Activated T-helper 1 cell treated with anti-CD3 and anti-CD28 coated beads, Interleukin-12 subunit alpha, Interleukin-12 subunit beta, Interleukin-2, Interleukin-4 antibody, amounts not matched to agents 30 ng/mL and 10 ng/mL and 1 ng/mL, durations not matched to agents 14 hours and 24 hours and 36 hours (primary cell): ENCODE measurements at regions of chrX and their contacts with region 1.

Region 1: DNA sequence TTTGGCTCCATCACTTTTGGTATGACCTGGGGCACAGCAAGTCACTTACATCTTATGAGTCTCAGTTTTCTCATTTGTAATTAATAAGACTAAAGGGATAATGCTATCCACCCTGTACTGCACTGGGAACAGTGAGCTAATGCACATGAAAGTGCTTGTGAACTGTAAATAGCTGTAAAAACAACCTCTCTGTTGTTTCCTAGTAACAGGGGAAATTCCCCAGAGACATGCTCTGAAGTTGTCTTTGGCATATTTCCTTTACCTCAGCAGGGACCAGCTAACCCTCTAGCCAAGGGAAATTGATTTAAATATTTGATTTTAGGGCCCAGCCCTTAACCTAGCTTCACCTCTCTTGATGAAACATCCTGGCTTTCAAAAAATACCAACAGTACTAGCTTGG is 6.1 kb upstream of the CYSLTR1 start:
- DNase-seq: peak; percentile 33
- H3K4me3 Mint-ChIP-seq: peak overlapping the region; percentile 53
- H3K27ac Mint-ChIP-seq: peak overlapping the region; percentile 93
- H3K4me1 Mint-ChIP-seq: peaks cover 73% of the 10 kb centered on the region
- H3K27me3 Mint-ChIP-seq: no peaks in the 10 kb centered on the region

Region 2: GRCh38 chrX:77519765-77520164 is 813.8 kb before region 1 on chrX:
- intact Hi-C with region 1: no loop called
- DNase-seq: no peak
- H3K4me3 Mint-ChIP-seq: no peak overlapping the region
- H3K27ac Mint-ChIP-seq: no peak overlapping the region
- H3K4me1 Mint-ChIP-seq: peaks cover 5% of the 10 kb centered on the region
- H3K27me3 Mint-ChIP-seq: no peaks in the 10 kb centered on the region

Region 3: DNA sequence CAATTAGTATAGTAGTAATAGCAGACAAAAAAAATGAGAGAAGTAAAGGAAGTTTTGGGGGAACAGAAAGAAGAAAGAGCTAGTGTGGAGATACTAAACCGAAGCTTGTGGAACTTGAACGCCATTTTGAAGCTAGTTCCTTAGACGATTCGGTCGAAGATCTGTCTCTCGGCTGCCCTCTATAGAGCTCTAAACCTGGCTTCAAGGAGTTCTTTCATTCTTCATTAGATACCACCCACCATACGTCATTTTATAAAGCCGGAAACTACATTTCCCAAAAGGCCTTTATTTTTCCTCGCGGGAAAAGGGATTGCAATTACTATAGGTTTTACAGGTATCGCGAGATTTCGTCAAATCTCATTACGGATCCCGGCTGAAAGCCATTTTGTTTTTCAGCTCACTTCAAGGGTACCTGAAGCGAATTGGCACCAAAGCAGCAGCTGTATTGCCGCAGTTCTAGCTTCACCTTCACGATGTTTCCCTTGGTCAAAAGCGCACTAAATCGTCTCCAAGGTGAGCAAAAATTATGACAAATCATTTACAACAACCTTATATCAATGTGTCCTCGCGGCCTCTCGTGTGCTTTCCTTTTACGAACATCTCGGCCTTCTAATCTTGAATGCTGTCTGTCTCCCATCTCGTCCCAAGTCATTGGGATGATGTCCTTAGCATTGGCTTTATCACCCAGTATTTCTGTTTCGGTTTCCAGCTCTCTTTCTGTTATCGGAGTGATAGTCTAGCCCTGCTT is 434.3 kb before region 1 on chrX and contains the start of gene COX7B:
- intact Hi-C with region 1: loop called (anchors 5 kb)
- DNase-seq: peak; percentile 65
- H3K4me3 Mint-ChIP-seq: peak within 1 kb of the TSS; percentile 95
- H3K27ac Mint-ChIP-seq: peak within 1 kb of the TSS; percentile 94
- H3K4me1 Mint-ChIP-seq: peaks cover 14% of the 10 kb centered on the region
- H3K27me3 Mint-ChIP-seq: peaks cover 2% of the 10 kb centered on the region
- total RNA-seq, gene COX7B: 272 and 286 TPM in 2 replicates

Region 4: GRCh38 chrX:78139160-78140123 is 194.1 kb before region 1 on chrX and contains the start of gene TAF9B:
- intact Hi-C with region 1: loop called (anchors 5 kb)
- DNase-seq: peak; percentile 78
- H3K4me3 Mint-ChIP-seq: peak within 1 kb of the TSS; percentile 92
- H3K27ac Mint-ChIP-seq: peak within 1 kb of the TSS; percentile 86
- H3K4me1 Mint-ChIP-seq: no peaks in the 10 kb centered on the region
- H3K27me3 Mint-ChIP-seq: no peaks in the 10 kb centered on the region
- total RNA-seq, gene TAF9B: 14.9 and 15.0 TPM in 2 replicates

Region 5: DNA sequence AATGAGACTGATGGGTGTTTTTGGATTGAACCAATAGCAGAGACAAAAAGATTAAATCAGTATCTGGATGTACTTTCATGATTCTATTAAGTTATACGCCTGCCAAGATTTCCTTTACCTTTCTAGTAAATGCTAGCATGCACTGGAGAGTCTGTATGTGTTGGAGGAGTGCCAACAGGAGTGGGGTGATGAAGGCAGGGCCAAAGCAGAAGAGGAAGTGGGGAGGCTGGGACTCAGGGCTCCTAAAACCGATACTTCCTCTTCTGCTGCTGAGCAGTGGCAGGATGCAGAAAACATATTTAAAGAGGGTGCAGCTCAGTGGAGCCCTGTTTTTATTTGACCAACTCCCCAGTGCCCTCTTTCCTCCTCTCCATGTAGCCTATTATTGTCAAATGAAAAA is 11.7 kb before region 1 on chrX:
- intact Hi-C with region 1: loop called (anchors 1 kb)
- DNase-seq: peak; percentile 31
- H3K4me3 Mint-ChIP-seq: peak overlapping the region; percentile 64
- H3K27ac Mint-ChIP-seq: peak overlapping the region; percentile 89
- H3K4me1 Mint-ChIP-seq: peaks cover 41% of the 10 kb centered on the region
- H3K27me3 Mint-ChIP-seq: no peaks in the 10 kb centered on the region

Region 6: GRCh38 chrX:78979789-78980464 is 646.4 kb after region 1 on chrX:
- intact Hi-C with region 1: loop called (anchors 10 kb)
- DNase-seq: no peak
- H3K4me3 Mint-ChIP-seq: peak overlapping the region; percentile 67
- H3K27ac Mint-ChIP-seq: peak overlapping the region; percentile 100
- H3K4me1 Mint-ChIP-seq: peaks cover 35% of the 10 kb centered on the region
- H3K27me3 Mint-ChIP-seq: no peaks in the 10 kb centered on the region

Region 7: DNA sequence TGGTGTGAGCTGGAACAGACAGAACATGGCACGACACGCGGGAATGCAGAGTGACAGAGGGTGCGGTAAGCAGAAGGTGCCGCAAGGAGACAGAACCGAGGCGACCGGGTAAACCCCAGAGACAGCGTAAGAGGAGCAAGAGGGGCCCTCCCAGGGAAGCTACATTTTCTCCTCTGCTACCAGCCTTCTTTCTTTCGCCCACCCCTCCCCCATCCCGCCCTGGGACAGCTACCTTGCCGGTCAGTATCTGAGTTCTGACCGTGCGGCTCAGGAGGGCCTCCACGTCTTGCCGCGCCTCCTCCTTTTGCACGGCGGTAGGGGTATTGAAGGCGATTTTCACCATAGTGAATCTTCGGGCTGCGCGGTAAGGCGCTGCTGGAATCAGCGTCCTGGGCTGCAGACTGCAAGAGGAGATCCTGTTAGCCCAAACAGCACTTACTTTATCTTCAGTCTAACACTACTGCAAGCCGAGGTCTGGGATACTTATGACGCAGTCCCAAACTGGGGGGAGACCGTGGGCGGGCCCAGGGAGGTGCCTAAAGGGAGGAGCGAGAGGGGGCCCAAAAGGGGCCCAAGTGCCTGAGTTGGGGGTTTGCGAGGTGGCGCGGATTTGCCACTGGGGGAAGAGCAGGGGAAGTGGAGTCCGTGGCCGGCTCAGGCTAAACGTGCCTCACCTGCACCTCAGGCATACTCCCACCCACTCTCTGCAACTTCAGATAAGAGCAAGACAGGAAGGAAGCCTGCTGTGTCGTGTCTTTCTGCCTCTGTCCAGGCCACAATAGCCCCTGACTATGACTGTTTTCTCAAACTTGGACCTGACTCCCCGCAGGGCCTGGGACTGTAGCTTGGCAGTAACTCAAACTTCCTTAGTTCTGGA is 1033.6 kb after region 1 on chrX and contains the start of gene ITM2A:
- intact Hi-C with region 1: loop called (anchors 5 kb)
- DNase-seq: peak; percentile 37
- H3K4me3 Mint-ChIP-seq: peak within 1 kb of the TSS; percentile 94
- H3K27ac Mint-ChIP-seq: peak within 1 kb of the TSS; percentile 95
- H3K4me1 Mint-ChIP-seq: peaks cover 35% of the 10 kb centered on the region
- H3K27me3 Mint-ChIP-seq: no peaks in the 10 kb centered on the region
- total RNA-seq, gene ITM2A: 114 and 116 TPM in 2 replicates